Motor neuron (in vitro differentiated cells): ENCODE measurements at regions of chr1 and their contacts with region 1.

Region 1: DNA sequence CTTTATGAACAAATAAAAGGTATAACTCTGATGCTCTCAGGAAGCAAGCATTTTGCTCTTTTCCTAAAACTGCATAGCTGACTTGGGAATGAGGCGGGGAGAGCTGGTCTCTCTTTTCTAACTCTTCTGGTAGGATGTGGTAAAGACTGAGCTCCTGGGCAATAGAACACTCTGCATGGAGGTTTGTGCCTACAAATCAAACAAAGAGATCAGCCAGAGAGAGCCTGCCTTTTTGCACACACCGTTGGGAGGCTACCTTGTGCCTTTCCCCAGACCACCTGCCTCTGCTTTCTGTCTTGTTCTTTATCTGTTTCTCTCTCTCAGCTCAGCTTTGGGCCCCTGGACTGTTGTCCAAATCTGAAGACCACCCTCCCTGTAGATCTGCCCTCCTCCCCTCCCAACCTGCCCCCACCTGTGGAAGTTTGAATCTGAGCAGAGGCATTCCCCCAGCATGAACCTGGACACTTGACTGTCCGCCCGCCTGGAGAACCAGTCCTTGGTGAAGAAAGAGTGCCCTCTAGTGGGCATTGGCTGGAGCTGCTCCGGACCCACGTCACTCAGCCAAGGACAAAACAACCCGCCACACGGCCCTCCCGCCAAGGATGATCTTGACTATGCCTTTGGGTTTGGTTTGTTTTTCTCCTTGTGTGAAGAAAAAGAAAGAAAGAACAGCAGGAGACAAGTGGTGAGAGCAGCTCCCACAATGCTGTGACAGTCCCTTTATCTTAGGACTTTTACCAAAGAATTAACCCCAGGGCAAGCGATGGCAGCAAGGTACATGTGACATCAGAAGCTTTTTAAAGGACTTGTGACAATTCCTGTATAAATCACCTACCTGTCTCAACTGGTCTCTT is 228.2 kb downstream of the PBX1 start:
- ATAC-seq: peak; percentile 97 to 99 (median 98)
- H3K4me3 ChIP-seq: no peak overlapping the region
- H3K27ac ChIP-seq: peak overlapping the region; percentile 9 to 14
- H3K4me1 ChIP-seq: peaks cover 33 to 60% of the 10 kb centered on the region in 2 donors

Region 2: GRCh38 chr1:163361123-163361934 is 1425.9 kb before region 1 on chr1:
- in situ Hi-C with region 1: loop called in 1 of 9 experiments (anchors 25 kb)
- ATAC-seq: peak in 7 of 8 experiments; percentile 17 to 63 (median 55)
- H3K4me3 ChIP-seq: no peak overlapping the region
- H3K27ac ChIP-seq: no peak overlapping the region
- H3K4me1 ChIP-seq: peaks cover 0 to 2% of the 10 kb centered on the region in 2 donors

Region 3: DNA sequence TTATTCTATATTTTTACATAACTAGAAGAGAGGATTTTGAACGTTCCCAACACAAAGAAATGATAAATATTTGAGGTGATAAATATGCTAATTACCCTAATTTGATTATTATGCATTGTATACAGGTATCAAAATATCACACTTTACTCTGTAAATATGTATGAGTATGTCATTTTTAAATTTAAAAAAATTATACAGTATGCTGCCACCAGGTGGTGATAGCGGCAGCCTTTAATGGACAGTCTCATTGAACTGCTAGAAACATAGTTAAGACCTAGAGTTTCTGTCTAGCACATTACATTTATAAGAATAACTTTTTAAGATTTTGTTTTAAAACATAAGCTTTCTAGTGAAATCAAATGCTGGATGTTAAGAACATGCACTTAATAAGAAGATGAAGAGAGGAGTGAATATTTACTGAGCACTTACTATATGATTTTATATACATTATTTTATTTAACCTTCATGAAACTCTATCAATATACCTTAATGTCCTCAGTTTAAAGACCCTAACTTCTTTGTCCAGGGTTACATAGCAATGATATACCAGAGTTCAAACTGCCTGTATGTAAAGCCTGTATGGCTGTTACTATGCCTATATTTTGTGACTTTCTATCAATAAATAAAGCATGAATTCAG is 1258.4 kb before region 1 on chr1:
- in situ Hi-C with region 1: loop called in 1 of 9 experiments (anchors 25 kb)
- ATAC-seq: peak in 3 of 8 experiments; percentile 28 to 57 (median 46)
- H3K4me3 ChIP-seq: no peak overlapping the region
- H3K27ac ChIP-seq: no peak overlapping the region
- H3K4me1 ChIP-seq: peaks cover 1 to 10% of the 10 kb centered on the region in 2 donors

Region 4: GRCh38 chr1:164617377-164618201 is 169.6 kb before region 1 on chr1:
- in situ Hi-C with region 1: loop called in 2 of 9 experiments (anchors 25 kb)
- ATAC-seq: peak in 6 of 8 experiments; percentile 8 to 74 (median 50)
- H3K4me3 ChIP-seq: no peak overlapping the region
- H3K27ac ChIP-seq: peak overlapping the region; percentile 1 to 10
- H3K4me1 ChIP-seq: peaks cover 59 to 86% of the 10 kb centered on the region in 2 donors

Region 5: GRCh38 chr1:165073185-165074007 is 286.2 kb after region 1 on chr1:
- in situ Hi-C with region 1: loop called in 1 of 9 experiments (anchors 25 kb)
- ATAC-seq: peak; percentile 65 to 91 (median 86)
- H3K4me3 ChIP-seq: no peak overlapping the region
- H3K27ac ChIP-seq: no peak overlapping the region
- H3K4me1 ChIP-seq: peaks cover 4 to 12% of the 10 kb centered on the region in 2 donors

Region 6: DNA sequence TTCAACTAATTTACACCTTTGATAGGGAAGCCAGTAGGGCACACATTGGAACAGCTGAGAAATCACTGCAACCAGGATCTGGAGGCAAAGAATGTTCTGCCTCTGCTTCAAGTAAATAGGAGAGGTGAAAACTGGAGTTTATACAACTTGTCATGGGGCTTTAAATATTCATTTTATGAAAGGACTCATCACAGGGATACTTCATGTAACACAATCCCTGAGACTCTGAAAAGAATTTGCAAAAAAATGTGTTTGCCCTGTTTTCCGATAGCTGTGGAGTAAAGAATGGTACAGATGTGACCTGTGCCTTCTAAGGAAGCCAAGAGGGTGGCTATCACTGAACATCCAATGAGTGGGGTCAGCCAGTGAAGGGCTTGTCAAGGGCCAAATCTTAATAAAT is 417.3 kb after region 1 on chr1:
- in situ Hi-C with region 1: no loop called
- ATAC-seq: peak in 3 of 8 experiments; percentile 23 to 64 (median 53)
- H3K4me3 ChIP-seq: no peak overlapping the region
- H3K27ac ChIP-seq: no peak overlapping the region
- H3K4me1 ChIP-seq: peaks cover 0 to 8% of the 10 kb centered on the region in 2 donors